ENCODE measurements at regions of chr7 and their contacts with region 1.

Region 1: GRCh38 chr7:106001886-106002285 is 38.8 kb downstream of the CDHR3 start:
- DNase-seq: no peak

Region 2: GRCh38 chr7:105838627-105839231 is 163.2 kb before region 1 on chr7:
- intact Hi-C with region 1: loop called in 1 of 2 experiments (anchors 5 kb)
- DNase-seq: no peak

Region 3: GRCh38 chr7:106012184-106012583 is 10.3 kb after region 1 on chr7:
- intact Hi-C with region 1: no loop called
- DNase-seq: no peak

Region 4: GRCh38 chr7:106022193-106022821 is 20.4 kb after region 1 on chr7:
- intact Hi-C with region 1: no loop called
- DNase-seq: no peak

Region 5: DNA sequence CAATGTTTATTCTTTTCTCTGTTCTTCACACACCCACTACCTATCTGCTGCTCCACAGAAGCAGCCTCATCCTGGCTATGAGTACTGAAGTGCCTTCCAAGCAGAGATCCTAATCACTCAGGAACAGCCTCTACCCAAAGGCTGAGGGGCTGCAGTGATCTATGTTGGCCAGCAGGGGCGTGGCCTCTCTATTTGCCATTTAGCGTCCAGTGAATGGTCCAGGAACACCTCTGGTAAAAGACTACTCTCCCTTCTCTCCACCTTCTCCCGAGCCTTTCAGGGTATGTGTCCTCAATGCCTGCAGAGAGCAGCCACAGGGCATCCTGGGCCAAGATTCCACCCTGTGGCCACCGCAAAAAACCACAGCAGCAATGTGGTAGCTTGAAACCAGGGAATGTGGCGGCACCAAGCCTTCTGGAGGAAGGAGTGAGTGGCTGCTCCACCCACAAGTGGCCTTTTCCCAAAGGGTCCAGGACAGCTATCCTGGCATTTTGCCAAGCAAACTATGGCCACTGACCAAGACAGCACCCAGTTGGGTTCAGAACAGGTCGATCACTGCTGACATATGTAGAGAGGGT is 39.3 kb after region 1 on chr7:
- intact Hi-C with region 1: no loop called
- DNase-seq: no peak

Region 6: DNA sequence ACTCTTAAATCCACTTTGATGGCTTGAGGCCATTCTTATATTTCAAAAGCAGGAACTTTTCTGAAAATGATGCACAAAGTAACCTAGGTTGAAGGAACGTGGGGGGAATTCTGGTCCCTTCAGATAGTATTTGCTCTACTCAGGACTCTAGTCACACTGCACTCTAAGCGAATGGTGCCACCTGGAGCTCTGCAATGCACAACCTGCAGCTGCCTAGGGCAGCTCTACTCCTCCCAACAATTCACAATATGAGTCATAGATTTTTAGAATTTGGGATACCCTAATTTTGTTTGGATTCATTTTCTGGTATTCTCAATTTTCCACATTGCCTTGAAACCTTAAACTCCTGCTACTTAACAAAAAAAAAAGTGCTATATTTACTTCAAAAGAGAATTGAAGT is 92.9 kb after region 1 on chr7:
- intact Hi-C with region 1: no loop called
- DNase-seq: no peak